Right ventricle myocardium superior (tissue), 1 donor: ENCODE measurements at regions of chr1 and their contacts with region 1.

Region 1: GRCh38 chr1:172719694-172720138 is 60.8 kb downstream of the FASLG start:
- DNase-seq: no peak
- ATAC-seq: peak; percentile 66

Region 2: DNA sequence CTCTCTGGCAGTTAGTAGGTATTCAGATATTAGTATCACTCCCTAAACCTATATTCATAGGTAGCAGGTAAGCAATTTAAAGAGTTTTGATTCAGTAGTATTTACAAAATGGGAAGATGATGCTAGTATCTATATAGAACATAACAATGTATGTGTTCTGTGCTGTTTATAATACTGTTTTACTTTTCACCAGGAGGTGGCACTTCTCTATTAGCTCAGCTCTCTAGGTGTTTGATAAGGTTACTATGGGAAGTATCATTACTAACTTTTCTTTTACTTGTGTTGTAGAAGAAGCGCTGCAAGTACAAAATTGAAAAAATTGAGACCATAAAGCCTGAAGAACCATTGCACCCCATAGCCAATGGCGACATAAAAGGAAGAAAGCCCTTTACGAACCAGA is 110.2 kb before region 1 on chr1:
- intact Hi-C with region 1: loop called (anchors 5 kb)
- DNase-seq: no peak
- ATAC-seq: peak; percentile 77

Region 3: GRCh38 chr1:172654535-172654934 is 65.2 kb before region 1 on chr1:
- intact Hi-C with region 1: no loop called
- DNase-seq: no peak
- ATAC-seq: no peak